Caco-2 (cell line): ENCODE measurements at regions of chrX and their contacts with region 1.

Region 1: DNA sequence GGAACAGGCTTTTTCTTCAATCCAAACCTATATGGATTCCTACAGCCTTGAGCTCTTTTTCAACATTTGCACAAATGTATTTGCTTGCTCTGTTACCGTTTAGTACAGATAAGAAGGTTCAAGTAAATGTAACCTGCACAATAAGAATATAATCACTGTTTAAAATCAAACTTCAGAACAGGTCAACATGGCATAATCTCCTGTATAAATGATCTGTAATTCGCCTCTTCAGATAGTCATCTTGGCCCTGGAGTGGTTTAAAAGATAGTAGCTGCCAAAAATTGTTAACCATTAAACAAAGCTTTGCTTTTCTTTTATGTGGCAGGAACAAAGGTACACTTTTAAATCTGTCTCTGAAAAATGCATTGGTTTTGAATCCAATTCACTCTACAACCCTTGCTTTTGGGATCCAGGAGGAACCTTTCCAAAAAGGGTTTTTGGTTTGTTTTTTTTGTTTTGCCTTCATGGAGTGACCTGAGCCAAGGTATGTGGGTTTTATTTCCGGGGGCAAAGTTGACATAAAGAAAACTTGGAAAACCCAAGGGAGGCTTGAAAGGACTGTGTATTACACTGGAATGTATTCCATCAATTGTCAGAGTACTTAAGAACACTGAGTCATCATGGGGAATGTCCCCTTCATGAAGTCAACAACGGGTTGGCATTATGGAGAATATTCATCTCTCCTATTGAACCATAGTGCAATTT is 210.4 kb upstream of the HCCS start:
- DNase-seq: peak; percentile 40 to 43
- H3K4me3 ChIP-seq: no peak overlapping the region
- H3K4me3 Mint-ChIP-seq: no peak overlapping the region
- H3K27ac Mint-ChIP-seq: peak overlapping the region; percentile 59
- H3K4me1 ChIP-seq: peaks cover 20% of the 10 kb centered on the region
- H3K4me1 Mint-ChIP-seq: peaks cover 11% of the 10 kb centered on the region
- H3K27me3 ChIP-seq: no peaks in the 10 kb centered on the region
- H3K27me3 Mint-ChIP-seq: no peaks in the 10 kb centered on the region
- CTCF ChIP-seq: no peak

Region 2: GRCh38 chrX:10833299-10834169 is 67.2 kb before region 1 on chrX:
- CTCF ChIA-PET with region 1: no interaction called
- POLR2A ChIA-PET with region 1: interaction called, 3 read pairs
- intact Hi-C with region 1: loop called (anchors 2 kb)
- DNase-seq: peak; percentile 82 to 88
- H3K4me3 ChIP-seq: peak overlapping the region; percentile 61
- H3K4me3 Mint-ChIP-seq: peak overlapping the region; percentile 85
- H3K27ac Mint-ChIP-seq: peak overlapping the region; percentile 59
- H3K4me1 ChIP-seq: peaks cover 13% of the 10 kb centered on the region
- H3K4me1 Mint-ChIP-seq: no peaks in the 10 kb centered on the region
- H3K27me3 ChIP-seq: no peaks in the 10 kb centered on the region
- H3K27me3 Mint-ChIP-seq: no peaks in the 10 kb centered on the region
- CTCF ChIP-seq: no peak

Region 3: DNA sequence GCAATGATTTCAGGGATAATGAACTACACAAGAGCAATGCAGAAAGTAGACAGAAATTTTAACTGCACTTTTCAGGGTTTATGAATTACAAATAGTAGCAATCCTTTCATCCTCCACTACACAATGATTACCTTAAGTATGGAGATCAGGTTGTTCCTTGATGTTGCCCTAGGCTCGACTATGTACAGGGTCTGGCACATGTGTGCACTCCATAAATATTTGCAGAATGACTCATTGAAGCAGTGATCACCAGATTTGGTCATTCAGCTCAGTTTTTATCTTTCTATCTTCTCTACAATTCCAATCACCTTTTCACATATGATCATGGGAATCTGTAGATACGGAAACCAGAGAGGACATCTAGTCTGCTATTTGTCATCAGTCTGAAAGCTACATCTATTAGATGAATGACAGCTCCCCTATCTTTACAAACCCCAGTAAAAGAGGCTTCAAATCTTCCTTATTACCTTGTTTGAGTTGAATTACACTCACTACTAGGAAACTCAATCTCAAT is 38.7 kb after region 1 on chrX:
- CTCF ChIA-PET with region 1: no interaction called
- POLR2A ChIA-PET with region 1: no interaction called
- intact Hi-C with region 1: loop called (anchors 2 kb)
- DNase-seq: peak; percentile 48 to 57
- H3K4me3 ChIP-seq: no peak overlapping the region
- H3K4me3 Mint-ChIP-seq: peak overlapping the region; percentile 9
- H3K27ac Mint-ChIP-seq: peak overlapping the region; percentile 47
- H3K4me1 ChIP-seq: peaks cover 13% of the 10 kb centered on the region
- H3K4me1 Mint-ChIP-seq: peaks cover 23% of the 10 kb centered on the region
- H3K27me3 ChIP-seq: no peaks in the 10 kb centered on the region
- H3K27me3 Mint-ChIP-seq: no peaks in the 10 kb centered on the region
- CTCF ChIP-seq: no peak

Region 4: GRCh38 chrX:10979956-10980355 is 79.2 kb after region 1 on chrX:
- CTCF ChIA-PET with region 1: no interaction called
- POLR2A ChIA-PET with region 1: no interaction called
- intact Hi-C with region 1: loop called (anchors 2 kb)
- DNase-seq: no peak
- H3K4me3 ChIP-seq: no peak overlapping the region
- H3K4me3 Mint-ChIP-seq: no peak overlapping the region
- H3K27ac Mint-ChIP-seq: peak overlapping the region; percentile 84
- H3K4me1 ChIP-seq: peaks cover 27% of the 10 kb centered on the region
- H3K4me1 Mint-ChIP-seq: peaks cover 16% of the 10 kb centered on the region
- H3K27me3 ChIP-seq: no peaks in the 10 kb centered on the region
- H3K27me3 Mint-ChIP-seq: no peaks in the 10 kb centered on the region
- CTCF ChIP-seq: no peak

Region 5: GRCh38 chrX:11059933-11060332 is 159.2 kb after region 1 on chrX:
- CTCF ChIA-PET with region 1: no interaction called
- POLR2A ChIA-PET with region 1: no interaction called
- intact Hi-C with region 1: loop called (anchors 10 kb)
- DNase-seq: no peak
- H3K4me3 ChIP-seq: no peak overlapping the region
- H3K4me3 Mint-ChIP-seq: no peak overlapping the region
- H3K27ac Mint-ChIP-seq: no peak overlapping the region
- H3K4me1 ChIP-seq: peaks cover 4% of the 10 kb centered on the region; the same call in 1 of the 2 replicates
- H3K4me1 Mint-ChIP-seq: peaks cover 5% of the 10 kb centered on the region
- H3K27me3 ChIP-seq: no peaks in the 10 kb centered on the region
- H3K27me3 Mint-ChIP-seq: no peaks in the 10 kb centered on the region
- CTCF ChIP-seq: no peak